Pancreas (tissue), 10 donors: ENCODE measurements at regions of chr17 and their contacts with region 1.

Region 1: DNA sequence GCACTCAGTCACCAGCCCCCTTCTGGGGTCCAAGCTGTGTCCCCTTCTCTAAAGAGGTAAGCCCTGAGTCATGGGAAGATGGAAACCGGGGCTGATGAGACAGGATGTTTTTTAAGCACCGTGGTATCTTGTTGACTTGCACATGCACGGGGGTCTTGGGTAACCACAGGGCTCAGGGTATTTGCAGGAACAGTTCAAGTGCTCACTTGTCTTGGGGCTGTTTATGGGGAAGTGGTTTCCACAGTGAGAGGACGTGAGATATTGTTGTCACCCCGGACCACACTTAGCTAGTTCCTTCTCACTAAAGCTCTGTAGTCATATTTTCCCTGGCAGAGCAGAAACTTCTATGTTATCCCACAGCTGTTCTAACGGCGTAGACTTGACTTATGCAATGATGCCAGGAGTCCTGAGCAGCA is 7.7 kb downstream of the CCL3L1 start:
- DNase-seq: peak in 1 of 6 donors; percentile 48
- ATAC-seq: peak in 3 of 4 donors; percentile 61 to 74 (median 71)
- H3K4me3 ChIP-seq: no peak overlapping the region
- H3K27ac ChIP-seq: no peak overlapping the region
- H3K4me1 ChIP-seq: no peaks in the 10 kb centered on the region
- H3K27me3 ChIP-seq: no peaks in the 10 kb centered on the region
- CTCF ChIP-seq: no peak

Region 2: DNA sequence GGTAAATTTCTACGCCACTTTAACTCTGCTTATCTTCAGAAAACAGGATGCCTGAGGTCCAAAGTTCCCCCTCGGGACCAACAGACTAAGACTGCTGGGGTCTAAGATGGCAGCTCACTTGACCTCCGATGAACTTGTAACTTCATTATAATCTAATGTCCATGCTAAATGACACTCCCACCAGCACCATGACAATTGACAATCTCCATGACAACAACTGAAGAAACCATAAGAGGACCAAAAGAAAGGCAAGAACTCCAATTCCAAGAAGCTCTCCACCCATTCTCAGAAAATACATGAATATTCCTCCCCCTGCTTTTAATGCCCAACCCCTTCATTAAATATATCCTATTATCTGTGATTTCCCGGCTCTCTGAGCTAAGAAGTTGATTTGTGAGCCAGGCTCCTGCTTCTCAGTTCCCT is 77.8 kb before region 1 on chr17:
- intact Hi-C with region 1: loop called in 1 of 3 experiments (anchors 5 kb)
- DNase-seq: no peak
- ATAC-seq: no peak
- H3K4me3 ChIP-seq: no peak overlapping the region
- H3K27ac ChIP-seq: no peak overlapping the region
- H3K4me1 ChIP-seq: no peaks in the 10 kb centered on the region
- H3K27me3 ChIP-seq: no peaks in the 10 kb centered on the region
- CTCF ChIP-seq: no peak